CD8-positive, alpha-beta memory T cell (primary cell): ENCODE measurements at regions of chrX and their contacts with region 1.

Region 1: GRCh38 chrX:13734278-13735172 is at the starts of genes OFD1 and TRAPPC2:
- DNase-seq: peak; percentile 81 to 95 (median 88)
- H3K4me3 ChIP-seq: peak within 1 kb of the TSS; percentile 86
- H3K4me3 Mint-ChIP-seq: peak within 1 kb of the TSS; percentile 94 to 99 (median 98)
- H3K27ac ChIP-seq: peak within 1 kb of the TSS; percentile 93
- H3K27ac Mint-ChIP-seq: peak within 1 kb of the TSS; percentile 98 to 99 (median 99)
- H3K4me1 ChIP-seq: peaks cover 34% of the 10 kb centered on the region
- H3K4me1 Mint-ChIP-seq: peaks cover 59 to 74% (median 63%) of the 10 kb centered on the region in 3 donors
- H3K27me3 ChIP-seq: no peaks in the 10 kb centered on the region
- H3K27me3 Mint-ChIP-seq: no peaks in the 10 kb centered on the region
- total RNA-seq, gene OFD1: 29.1 to 30.4 TPM
- total RNA-seq, gene TRAPPC2: 18.7 to 19.0 TPM

Region 2: GRCh38 chrX:13688958-13689740 is 45.4 kb before region 1 on chrX and contains the start of gene RAB9A:
- CTCF ChIA-PET with region 1: interaction called, 8 read pairs
- POLR2A ChIA-PET with region 1: interaction called, 17 read pairs
- DNase-seq: peak; percentile 74 to 86 (median 79)
- H3K4me3 ChIP-seq: peak within 1 kb of the TSS; percentile 80
- H3K4me3 Mint-ChIP-seq: peak within 1 kb of the TSS; percentile 89 to 96 (median 93)
- H3K27ac ChIP-seq: peak within 1 kb of the TSS; percentile 82
- H3K27ac Mint-ChIP-seq: peak within 1 kb of the TSS; percentile 91 to 99 (median 96)
- H3K4me1 ChIP-seq: peaks cover 35% of the 10 kb centered on the region
- H3K4me1 Mint-ChIP-seq: peaks cover 60 to 81% (median 71%) of the 10 kb centered on the region in 3 donors
- H3K27me3 ChIP-seq: no peaks in the 10 kb centered on the region
- H3K27me3 Mint-ChIP-seq: peaks cover 0 to 8% of the 10 kb centered on the region in 2 donors
- total RNA-seq, gene RAB9A: 27.1 to 32.8 TPM

Region 3: DNA sequence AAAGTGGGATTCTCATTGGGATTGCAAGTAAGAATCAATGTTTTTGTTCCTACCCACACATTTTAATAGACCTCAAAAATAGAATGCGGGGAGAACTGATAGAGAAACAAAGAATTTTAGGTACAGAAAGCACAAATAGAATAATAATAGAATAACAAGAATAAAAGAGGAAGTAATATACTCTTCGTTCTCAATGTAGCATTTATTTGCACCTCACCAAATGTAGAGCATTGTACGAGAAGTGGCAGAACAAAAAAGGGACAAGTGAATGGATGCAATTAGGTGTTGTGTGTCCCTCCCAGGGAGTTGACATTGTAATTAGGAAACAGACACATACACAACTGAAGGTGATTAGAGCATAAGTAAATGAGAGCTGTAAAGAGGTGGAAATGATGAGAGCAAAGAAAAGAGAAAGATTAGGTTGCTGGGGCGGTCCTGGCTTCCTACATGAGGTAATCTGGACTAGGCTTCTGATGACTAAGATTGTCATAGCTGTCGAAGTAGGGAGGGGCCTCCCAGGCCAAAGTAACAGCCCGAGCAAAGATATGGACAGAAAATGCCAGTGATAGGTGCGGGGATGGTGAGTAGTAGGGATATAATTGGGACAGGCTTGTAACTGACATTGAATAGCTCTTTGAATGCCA is 35.2 kb before region 1 on chrX:
- CTCF ChIA-PET with region 1: interaction called, 10 read pairs
- POLR2A ChIA-PET with region 1: interaction called, 4 read pairs
- DNase-seq: no peak
- H3K4me3 ChIP-seq: no peak overlapping the region
- H3K4me3 Mint-ChIP-seq: peak overlapping the region in 2 of 7 donors; percentile 27 to 58
- H3K27ac ChIP-seq: no peak overlapping the region
- H3K27ac Mint-ChIP-seq: peak overlapping the region in 7 of 8 donors; percentile 3 to 88 (median 45)
- H3K4me1 ChIP-seq: peaks cover 50% of the 10 kb centered on the region
- H3K4me1 Mint-ChIP-seq: peaks cover 73 to 96% (median 95%) of the 10 kb centered on the region in 3 donors
- H3K27me3 ChIP-seq: no peaks in the 10 kb centered on the region
- H3K27me3 Mint-ChIP-seq: peaks cover 0 to 1% of the 10 kb centered on the region in 2 donors

Region 4: DNA sequence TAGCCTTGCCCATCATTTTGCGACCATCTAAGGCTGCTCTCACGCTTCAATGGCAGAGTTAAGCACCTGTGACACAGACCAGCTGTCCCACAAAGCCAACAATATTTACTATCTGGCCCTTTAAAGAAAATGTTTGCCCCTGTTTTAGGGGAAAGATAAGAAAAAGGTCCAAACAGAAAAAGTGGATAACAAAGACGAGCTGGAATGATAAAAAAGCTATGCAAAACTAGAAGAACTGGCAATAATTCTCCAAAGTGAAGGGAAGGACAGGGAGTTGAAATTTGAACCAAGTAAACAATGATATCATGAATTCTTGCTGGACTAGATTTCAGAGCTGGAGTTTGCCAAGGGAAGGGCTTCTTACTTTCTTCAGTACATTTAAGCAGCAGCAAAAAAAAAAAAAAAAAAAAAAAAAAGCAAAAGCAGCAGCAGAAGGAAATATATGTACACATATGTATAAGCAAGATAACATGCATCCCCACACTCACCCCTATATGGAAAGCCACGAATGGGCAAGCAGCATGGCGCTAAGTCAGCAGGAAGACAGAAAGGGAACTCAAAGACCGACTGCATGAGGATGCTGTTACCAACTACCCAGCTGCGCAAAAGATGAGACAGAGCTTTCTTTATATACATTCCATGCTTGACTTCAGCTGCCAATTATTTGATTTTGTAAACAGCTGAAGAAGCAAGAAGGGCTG is 12.6 kb before region 1 on chrX:
- CTCF ChIA-PET with region 1: interaction called, 16 read pairs
- POLR2A ChIA-PET with region 1: interaction called, 23 read pairs
- DNase-seq: no peak
- H3K4me3 ChIP-seq: no peak overlapping the region
- H3K4me3 Mint-ChIP-seq: peak overlapping the region in 3 of 7 donors; percentile 1 to 29 (median 12)
- H3K27ac ChIP-seq: peak overlapping the region; percentile 24
- H3K27ac Mint-ChIP-seq: peak overlapping the region; percentile 47 to 80 (median 74)
- H3K4me1 ChIP-seq: peaks cover 34% of the 10 kb centered on the region
- H3K4me1 Mint-ChIP-seq: peaks cover 77 to 90% (median 89%) of the 10 kb centered on the region in 3 donors
- H3K27me3 ChIP-seq: no peaks in the 10 kb centered on the region
- H3K27me3 Mint-ChIP-seq: peaks cover 0 to 2% of the 10 kb centered on the region in 2 donors

Region 5: DNA sequence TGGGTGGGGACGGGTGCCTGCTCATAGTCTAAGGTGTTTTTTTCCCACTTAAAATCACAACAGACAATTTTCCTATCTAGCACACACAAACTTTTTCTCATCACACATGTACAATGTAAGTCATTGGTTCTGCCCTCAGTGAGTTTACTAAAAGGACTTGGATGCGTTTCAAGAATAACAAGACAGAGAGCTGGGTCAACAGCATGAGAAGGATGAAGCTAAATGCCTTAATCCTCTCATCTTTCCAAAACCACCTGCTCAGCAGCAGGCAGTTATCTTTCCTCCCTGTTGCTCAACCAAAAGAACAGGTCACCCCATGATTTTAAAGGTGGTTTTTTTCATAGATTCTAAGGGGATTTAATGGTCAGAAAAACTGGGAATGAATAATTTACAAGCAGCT is 40.2 kb after region 1 on chrX:
- CTCF ChIA-PET with region 1: no interaction called
- POLR2A ChIA-PET with region 1: no interaction called
- DNase-seq: no peak
- H3K4me3 ChIP-seq: no peak overlapping the region
- H3K4me3 Mint-ChIP-seq: no peak overlapping the region
- H3K27ac ChIP-seq: no peak overlapping the region
- H3K27ac Mint-ChIP-seq: peak overlapping the region in 3 of 8 donors; percentile 17 to 38 (median 22)
- H3K4me1 ChIP-seq: no peaks in the 10 kb centered on the region
- H3K4me1 Mint-ChIP-seq: peaks cover 0 to 9% (median 0%) of the 10 kb centered on the region in 3 donors
- H3K27me3 ChIP-seq: no peaks in the 10 kb centered on the region
- H3K27me3 Mint-ChIP-seq: no peaks in the 10 kb centered on the region